SK-N-SH (cell line): ENCODE measurements at regions of chr4 and their contacts with region 1.

Region 1: DNA sequence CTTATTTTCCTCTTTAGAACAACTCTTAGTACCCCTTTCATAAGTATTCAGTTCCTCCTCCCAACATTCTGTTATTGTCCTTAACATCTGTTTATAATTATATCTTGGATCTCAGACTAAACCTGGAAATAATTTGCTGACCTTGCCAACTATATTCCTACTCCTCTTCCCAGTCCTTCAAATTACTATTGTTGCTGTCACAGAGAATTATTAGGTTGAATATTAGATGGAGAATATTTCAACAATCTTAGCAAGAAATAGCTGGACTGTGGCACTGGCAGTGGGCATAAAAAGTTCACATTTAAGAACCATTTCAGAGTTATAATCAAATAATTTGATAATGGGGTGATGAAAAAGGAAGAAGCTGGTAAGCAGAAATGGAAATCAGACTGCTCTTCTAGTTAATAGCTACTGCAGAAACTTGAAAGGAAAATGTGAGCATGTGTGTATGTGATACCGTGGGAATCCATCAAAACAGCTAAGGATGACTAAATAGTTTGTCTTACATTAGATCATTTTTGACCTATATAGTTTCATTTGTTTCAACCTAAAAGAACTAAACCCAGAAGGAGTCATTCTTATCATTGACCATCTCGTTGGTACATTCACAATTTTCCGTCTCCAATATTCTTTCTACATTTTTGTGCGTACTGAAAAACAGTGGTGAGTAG is 43.3 kb upstream of the PRDM8 start:
- DNase-seq: peak; percentile 10
- H3K4me3 ChIP-seq: peak overlapping the region; percentile 29 to 40; a peak in 1 of 4 replicates
- H3K27ac ChIP-seq: peak overlapping the region; percentile 88 to 90
- H3K4me1 ChIP-seq: peaks cover 0 to 13% of the 10 kb centered on the region in 2 experiments; a peak in 3 of 4 replicates
- H3K27me3 ChIP-seq: no peaks in the 10 kb centered on the region
- CTCF ChIP-seq: no peak
- EP300 ChIP-seq: no peak
- RAD21 ChIP-seq: no peak

Region 2: DNA sequence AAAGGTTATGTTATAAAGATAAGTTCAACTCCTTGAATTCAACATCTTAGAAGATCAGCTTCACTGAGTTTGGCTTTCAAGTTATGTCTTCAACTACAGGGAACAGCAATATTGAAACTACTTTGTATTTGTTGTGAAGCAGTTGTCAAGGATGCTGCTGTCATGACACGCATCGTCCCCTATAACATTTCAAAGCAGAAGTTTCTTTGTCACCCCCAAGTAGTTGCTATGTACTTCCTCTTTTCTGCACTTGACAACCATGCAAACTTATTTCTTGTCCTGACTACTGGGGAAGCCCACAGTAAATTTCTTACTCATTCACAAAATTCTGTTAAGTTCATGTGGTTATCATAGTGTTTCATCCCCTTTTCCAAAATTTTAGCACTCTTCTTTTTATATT is 95.3 kb before region 1 on chr4:
- CTCF ChIA-PET with region 1: no interaction called
- POLR2A ChIA-PET with region 1: no interaction called
- DNase-seq: no peak
- H3K4me3 ChIP-seq: no peak overlapping the region
- H3K27ac ChIP-seq: peak overlapping the region in 1 of 2 experiments; percentile 58; a peak in 2 of 4 replicates
- H3K4me1 ChIP-seq: peaks cover 7 to 19% of the 10 kb centered on the region in 2 experiments; a peak in 3 of 4 replicates
- H3K27me3 ChIP-seq: no peaks in the 10 kb centered on the region
- CTCF ChIP-seq: no peak
- EP300 ChIP-seq: no peak
- RAD21 ChIP-seq: no peak

Region 3: GRCh38 chr4:80125252-80126177 is 28.5 kb before region 1 on chr4:
- CTCF ChIA-PET with region 1: interaction called, 31 read pairs
- POLR2A ChIA-PET with region 1: no interaction called
- DNase-seq: no peak
- H3K4me3 ChIP-seq: no peak overlapping the region
- H3K27ac ChIP-seq: peak overlapping the region in 1 of 2 experiments; percentile 16; a peak in 1 of 4 replicates
- H3K4me1 ChIP-seq: peaks cover 0 to 17% of the 10 kb centered on the region in 2 experiments; a peak in 2 of 4 replicates
- H3K27me3 ChIP-seq: no peaks in the 10 kb centered on the region
- CTCF ChIP-seq: peak; percentile 70
- EP300 ChIP-seq: no peak
- RAD21 ChIP-seq: peak; percentile 67

Region 4: GRCh38 chr4:80184053-80184790 is 30.2 kb after region 1 on chr4:
- CTCF ChIA-PET with region 1: interaction called, 11 read pairs
- POLR2A ChIA-PET with region 1: no interaction called
- DNase-seq: peak; percentile 88
- H3K4me3 ChIP-seq: peak overlapping the region; percentile 62 to 70
- H3K27ac ChIP-seq: peak overlapping the region; percentile 34 to 66; a peak in 3 of 4 replicates
- H3K4me1 ChIP-seq: peaks cover 0 to 7% of the 10 kb centered on the region in 2 experiments; a peak in 1 of 4 replicates
- H3K27me3 ChIP-seq: no peaks in the 10 kb centered on the region
- CTCF ChIP-seq: peak; percentile 70
- EP300 ChIP-seq: no peak
- RAD21 ChIP-seq: peak; percentile 66

Region 5: GRCh38 chr4:80471756-80472155 is 317.7 kb after region 1 on chr4:
- CTCF ChIA-PET with region 1: no interaction called
- POLR2A ChIA-PET with region 1: no interaction called
- DNase-seq: no peak
- H3K4me3 ChIP-seq: peak overlapping the region; percentile 35 to 47; a peak in 3 of 4 replicates
- H3K27ac ChIP-seq: peak overlapping the region; percentile 33 to 43; a peak in 2 of 4 replicates
- H3K4me1 ChIP-seq: no peaks in the 10 kb centered on the region; a peak in 1 of 4 replicates
- H3K27me3 ChIP-seq: no peaks in the 10 kb centered on the region
- CTCF ChIP-seq: no peak
- EP300 ChIP-seq: no peak
- RAD21 ChIP-seq: no peak

Region 6: DNA sequence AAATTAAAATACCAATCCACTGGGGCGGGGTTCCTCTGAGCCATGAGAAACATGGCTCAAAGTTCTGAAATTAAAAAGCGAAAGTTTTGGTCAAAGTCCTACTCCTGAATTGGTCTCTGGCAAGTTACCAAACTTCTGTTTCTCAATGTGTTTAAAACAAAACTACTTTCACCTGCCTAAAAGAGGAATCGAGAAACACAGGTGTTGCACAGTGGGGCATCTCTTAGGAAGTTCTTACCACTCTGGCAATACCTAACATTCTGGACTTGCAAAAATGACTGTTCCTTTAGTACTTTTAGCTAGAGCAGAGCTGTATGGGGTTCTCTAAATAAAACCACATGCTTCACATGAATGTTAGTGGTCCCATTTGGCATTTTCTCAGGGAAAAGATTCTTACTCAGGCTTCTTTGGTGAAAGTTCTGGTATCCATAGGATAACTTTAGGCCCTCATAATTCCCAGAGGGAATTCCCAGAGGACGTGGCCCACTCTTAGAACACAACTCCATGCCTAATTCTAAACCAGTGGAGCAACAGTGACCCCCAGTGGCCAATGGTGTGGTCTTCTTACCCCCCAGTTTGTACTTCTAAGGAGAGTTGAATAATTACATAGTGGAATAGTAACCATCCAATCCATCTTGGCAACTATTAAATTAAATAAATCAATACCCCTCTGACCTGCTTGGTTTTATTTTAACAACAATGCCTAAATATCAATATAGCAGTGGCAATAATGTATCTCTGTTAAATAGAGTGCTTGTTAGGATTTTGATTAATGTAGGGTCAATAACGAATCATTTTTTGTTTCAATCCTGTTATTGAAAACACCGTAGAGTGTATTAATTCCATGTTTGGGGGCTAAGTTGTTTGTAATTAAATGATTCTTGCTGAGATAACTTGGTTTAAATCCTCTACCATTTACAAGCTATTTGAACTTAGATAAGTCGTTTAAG is 898.4 kb after region 1 on chr4:
- CTCF ChIA-PET with region 1: no interaction called
- POLR2A ChIA-PET with region 1: no interaction called
- DNase-seq: peak; percentile 20
- H3K4me3 ChIP-seq: no peak overlapping the region; a peak in 1 of 4 replicates
- H3K27ac ChIP-seq: no peak overlapping the region
- H3K4me1 ChIP-seq: no peaks in the 10 kb centered on the region
- H3K27me3 ChIP-seq: no peaks in the 10 kb centered on the region; the same call in 1 of the 2 replicates
- CTCF ChIP-seq: peak; percentile 87
- EP300 ChIP-seq: no peak
- RAD21 ChIP-seq: peak; percentile 70